ENCODE measurements at regions of chr13 and their contacts with region 1.

Region 1: DNA sequence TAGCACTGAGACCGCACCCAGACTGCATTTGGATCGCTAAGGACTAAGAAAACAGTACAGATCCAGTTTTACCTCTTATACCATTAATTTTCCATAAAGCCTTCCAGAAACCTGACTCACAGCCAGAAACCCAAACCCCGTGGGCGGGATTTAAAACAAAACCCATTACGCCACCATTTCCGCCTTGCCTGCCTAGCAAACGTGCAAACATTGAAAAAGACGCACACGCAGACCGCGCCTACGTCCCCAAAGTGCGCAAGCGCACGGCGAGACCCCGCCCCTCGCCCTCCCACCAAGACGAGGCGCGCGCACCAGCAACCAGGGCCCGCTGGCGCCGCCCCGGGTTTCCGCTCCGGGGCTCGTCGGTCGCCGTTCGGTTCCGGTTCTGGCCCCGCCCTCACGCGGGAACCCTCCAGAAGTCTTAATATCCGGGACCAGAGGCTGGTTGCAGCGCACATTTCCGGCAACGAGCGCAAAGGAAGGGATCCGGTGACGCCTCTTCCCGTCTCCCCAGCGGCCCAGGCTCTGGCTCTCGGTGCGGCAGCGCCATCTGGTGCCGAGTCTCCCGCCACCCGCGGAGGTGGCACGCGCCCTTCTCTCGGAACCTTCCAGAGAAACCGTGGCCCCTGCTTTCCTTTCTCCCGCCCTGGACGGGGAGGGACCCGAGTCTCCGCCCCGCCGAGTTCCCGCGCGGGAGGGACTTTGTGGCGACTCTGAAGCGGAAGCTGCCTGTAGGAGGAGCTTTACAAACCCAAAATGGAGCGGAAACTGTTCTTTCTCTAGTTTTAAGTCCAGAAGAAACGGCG is 256.9 kb upstream of the STARD13 start:
- DNase-seq: peak; percentile 100
- ATAC-seq: peak; percentile 83
- H3K4me3 ChIP-seq: peak overlapping the region; percentile 57 to 98 (median 84)
- H3K4me3 Mint-ChIP-seq: peak overlapping the region; percentile 96
- H3K27ac ChIP-seq: peak overlapping the region; percentile 95 to 100
- H3K27ac Mint-ChIP-seq: peak overlapping the region; percentile 100
- H3K4me1 ChIP-seq: peaks cover 19 to 26% of the 10 kb centered on the region in 2 donors
- H3K4me1 Mint-ChIP-seq: peaks cover 39% of the 10 kb centered on the region
- H3K27me3 ChIP-seq: no peaks in the 10 kb centered on the region
- H3K27me3 Mint-ChIP-seq: no peaks in the 10 kb centered on the region
- CTCF ChIP-seq: peak; percentile 79

Region 2: DNA sequence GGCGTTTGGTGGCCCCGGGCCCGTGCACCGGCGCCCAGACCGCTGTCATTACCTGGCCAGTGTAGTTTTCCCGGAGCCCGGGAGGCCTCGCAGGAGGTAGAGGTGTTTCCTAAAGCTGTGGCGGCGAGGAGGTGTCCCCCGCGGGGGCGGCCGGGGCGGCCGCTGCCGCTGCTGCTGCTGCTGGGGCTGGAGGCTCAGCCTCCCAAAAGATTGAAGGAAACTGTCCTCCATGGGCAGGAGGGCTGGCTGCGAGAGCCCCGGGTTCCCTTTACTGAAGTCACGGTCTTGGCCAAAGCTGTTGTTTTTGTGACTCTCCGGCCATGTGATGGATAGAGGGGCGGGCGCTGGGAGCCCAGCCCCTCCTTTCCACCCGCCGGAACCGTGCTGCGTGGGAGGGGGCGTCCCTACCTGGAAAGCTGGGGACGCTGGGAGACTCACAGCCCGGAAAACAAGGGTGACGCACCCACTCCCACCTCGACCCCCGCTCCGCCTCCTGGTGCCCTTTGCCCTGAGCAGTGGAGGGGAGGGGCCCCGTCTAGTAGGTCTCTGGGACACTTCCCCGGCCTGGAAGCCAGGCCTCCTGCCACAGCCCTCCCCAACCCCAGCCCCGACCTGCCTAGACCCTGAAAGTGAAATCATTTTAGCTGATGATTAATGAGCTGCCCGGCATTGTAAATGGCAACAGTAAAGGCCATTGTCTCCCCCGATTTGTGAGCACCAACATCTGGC is 1114.5 kb before region 1 on chr13 and contains the start of gene N4BP2L1:
- CTCF ChIA-PET with region 1: no interaction called
- POLR2A ChIA-PET with region 1: interaction called, 3 read pairs
- intact Hi-C with region 1: loop called (anchors 1 kb)
- DNase-seq: peak; percentile 93
- ATAC-seq: peak; percentile 74
- H3K4me3 ChIP-seq: peak within 1 kb of the TSS; percentile 73 to 93 (median 80)
- H3K4me3 Mint-ChIP-seq: peak within 1 kb of the TSS; percentile 88
- H3K27ac ChIP-seq: peak within 1 kb of the TSS; percentile 95 to 98
- H3K27ac Mint-ChIP-seq: peak within 1 kb of the TSS; percentile 96
- H3K4me1 ChIP-seq: peaks cover 28 to 47% of the 10 kb centered on the region in 2 donors
- H3K4me1 Mint-ChIP-seq: peaks cover 48% of the 10 kb centered on the region
- H3K27me3 ChIP-seq: no peaks in the 10 kb centered on the region
- H3K27me3 Mint-ChIP-seq: no peaks in the 10 kb centered on the region
- CTCF ChIP-seq: no peak
- total RNA-seq, gene N4BP2L1: 52.8 and 59.0 TPM in 2 replicates

Region 3: DNA sequence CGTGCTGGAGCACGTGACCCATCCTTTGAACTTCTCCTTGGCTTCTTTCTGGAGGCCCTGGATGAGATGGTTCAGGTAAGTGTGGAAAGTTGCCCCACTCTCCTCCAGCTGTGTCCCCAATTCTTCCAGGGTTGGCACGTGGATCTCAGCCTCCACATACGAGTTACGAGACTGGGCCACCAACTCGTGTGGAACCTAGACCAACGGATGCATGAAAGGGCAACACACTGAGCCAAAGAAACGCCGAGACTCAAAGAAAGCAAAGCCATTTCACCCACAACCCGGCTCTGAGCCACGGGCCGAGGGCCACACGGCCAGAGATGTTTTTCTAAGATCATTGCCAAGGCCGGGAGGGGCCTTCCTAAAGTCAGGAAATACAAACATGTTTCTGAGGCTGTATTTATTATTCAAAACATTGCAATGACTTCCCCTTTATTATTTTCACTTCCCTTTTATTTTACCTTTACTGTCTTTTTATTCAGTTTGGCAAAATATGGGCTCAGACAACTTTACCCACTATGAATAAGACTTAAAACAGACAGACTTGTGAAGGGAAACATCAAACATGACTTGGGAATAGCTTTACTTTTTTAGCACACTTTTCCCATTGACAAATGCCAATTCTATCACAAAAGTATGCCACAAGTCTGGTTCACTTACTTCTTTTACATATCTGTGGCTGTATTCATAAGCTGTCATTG is 431.6 kb before region 1 on chr13:
- CTCF ChIA-PET with region 1: no interaction called
- POLR2A ChIA-PET with region 1: no interaction called
- intact Hi-C with region 1: loop called (anchors 5 kb)
- DNase-seq: peak; percentile 65
- ATAC-seq: peak; percentile 69
- H3K4me3 ChIP-seq: peak overlapping the region in 3 of 5 experiments; percentile 12 to 44 (median 41)
- H3K4me3 Mint-ChIP-seq: peak overlapping the region; percentile 77
- H3K27ac ChIP-seq: no peak overlapping the region
- H3K27ac Mint-ChIP-seq: peak overlapping the region; percentile 69
- H3K4me1 ChIP-seq: peaks cover 33 to 43% of the 10 kb centered on the region in 2 donors
- H3K4me1 Mint-ChIP-seq: peaks cover 47% of the 10 kb centered on the region
- H3K27me3 ChIP-seq: peaks cover 0 to 19% (median 8%) of the 10 kb centered on the region in 4 experiments
- H3K27me3 Mint-ChIP-seq: peaks cover 37% of the 10 kb centered on the region
- CTCF ChIP-seq: no peak

Region 4: DNA sequence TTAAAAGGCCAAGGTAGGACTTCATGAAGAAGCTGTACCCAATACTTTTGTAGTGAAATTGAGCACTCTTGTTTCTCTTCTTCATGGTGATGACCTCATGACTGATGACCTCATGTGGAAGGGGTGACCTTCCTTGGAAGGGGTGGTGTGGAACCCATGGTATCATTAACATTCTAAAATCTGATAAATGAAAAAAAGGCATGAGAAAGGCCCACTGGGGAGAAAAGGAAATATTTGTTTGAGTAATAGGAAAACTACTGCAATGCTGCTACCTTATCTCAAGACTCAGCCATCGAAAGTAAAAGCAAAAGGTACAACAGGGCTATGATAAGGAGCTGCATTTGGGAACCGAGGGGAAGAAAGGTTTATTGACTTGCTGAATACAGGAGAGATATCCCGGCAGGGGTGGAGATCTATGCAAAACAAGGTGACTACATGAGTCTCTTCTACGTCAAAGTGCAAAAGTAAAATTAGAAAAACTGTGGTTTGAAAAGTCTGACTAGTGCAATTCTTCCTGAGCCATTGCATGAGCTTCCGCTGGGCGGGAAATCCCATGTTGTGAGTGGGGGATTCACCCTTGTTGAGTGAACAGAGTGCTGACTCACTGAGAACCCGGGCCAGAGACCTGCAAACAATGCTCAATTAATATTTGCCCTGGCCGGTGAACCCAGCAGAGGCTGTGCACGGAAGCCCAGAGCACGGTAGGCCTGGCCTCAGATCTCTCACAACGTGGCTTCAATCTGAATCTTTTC is 136.6 kb after region 1 on chr13:
- CTCF ChIA-PET with region 1: interaction called, 3 read pairs
- POLR2A ChIA-PET with region 1: no interaction called
- intact Hi-C with region 1: loop called (anchors 2 kb)
- DNase-seq: peak; percentile 68
- ATAC-seq: peak; percentile 90
- H3K4me3 ChIP-seq: peak overlapping the region in 4 of 5 experiments; percentile 16 to 48 (median 35)
- H3K4me3 Mint-ChIP-seq: peak overlapping the region; percentile 78
- H3K27ac ChIP-seq: no peak overlapping the region
- H3K27ac Mint-ChIP-seq: peak overlapping the region; percentile 34
- H3K4me1 ChIP-seq: peaks cover 0 to 11% of the 10 kb centered on the region in 2 donors
- H3K4me1 Mint-ChIP-seq: peaks cover 10% of the 10 kb centered on the region
- H3K27me3 ChIP-seq: no peaks in the 10 kb centered on the region
- H3K27me3 Mint-ChIP-seq: peaks cover 10% of the 10 kb centered on the region
- CTCF ChIP-seq: no peak

Region 5: DNA sequence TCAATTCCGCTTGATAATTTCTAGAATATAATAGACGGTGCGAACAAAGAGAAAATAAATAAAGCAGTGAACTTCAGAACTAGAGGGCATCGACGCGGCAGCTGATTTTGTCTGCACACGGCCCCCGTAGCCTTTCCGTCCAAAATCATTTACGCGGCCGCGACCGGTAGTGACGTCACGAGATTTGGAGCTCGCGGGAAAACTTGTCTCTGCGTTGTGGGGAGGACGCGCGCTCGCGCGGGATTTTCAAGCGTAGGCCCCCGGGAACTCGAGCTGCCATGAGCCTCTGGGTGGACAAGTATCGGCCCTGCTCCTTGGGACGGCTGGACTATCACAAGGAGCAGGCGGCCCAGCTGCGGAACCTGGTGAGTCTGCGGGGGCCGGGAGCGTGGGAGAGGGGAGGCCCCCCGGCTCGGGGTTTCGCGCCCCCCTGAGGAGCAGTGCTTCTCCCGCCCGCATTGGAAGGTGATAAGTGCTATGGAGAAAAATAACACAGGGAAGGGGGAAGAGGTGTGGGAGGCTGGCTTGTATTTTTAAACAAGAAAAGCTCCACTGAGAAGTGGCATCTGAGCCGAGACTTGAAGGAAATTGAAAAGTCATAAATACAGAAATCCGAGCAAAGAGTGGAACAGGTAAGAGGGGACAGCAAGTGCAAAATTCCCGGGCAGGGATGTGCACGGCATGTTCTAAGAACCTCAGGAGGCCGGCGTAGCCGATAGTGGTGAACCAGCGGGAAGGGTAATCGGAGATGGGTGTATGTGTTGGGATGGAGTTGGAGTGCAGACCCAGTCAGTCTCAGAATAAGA is 275.6 kb after region 1 on chr13 and contains the start of gene RFC3:
- CTCF ChIA-PET with region 1: interaction called, 6 read pairs
- POLR2A ChIA-PET with region 1: interaction called, 3 read pairs
- intact Hi-C with region 1: loop called (anchors 1 kb)
- DNase-seq: peak; percentile 94
- ATAC-seq: peak; percentile 84
- H3K4me3 ChIP-seq: peak within 1 kb of the TSS; percentile 83 to 97 (median 94)
- H3K4me3 Mint-ChIP-seq: peak within 1 kb of the TSS; percentile 94
- H3K27ac ChIP-seq: peak within 1 kb of the TSS; percentile 50 to 63
- H3K27ac Mint-ChIP-seq: peak within 1 kb of the TSS; percentile 90
- H3K4me1 ChIP-seq: peaks cover 3 to 13% of the 10 kb centered on the region in 2 donors
- H3K4me1 Mint-ChIP-seq: peaks cover 18% of the 10 kb centered on the region
- H3K27me3 ChIP-seq: no peaks in the 10 kb centered on the region
- H3K27me3 Mint-ChIP-seq: no peaks in the 10 kb centered on the region
- CTCF ChIP-seq: no peak
- total RNA-seq, gene RFC3: 9.2 and 9.4 TPM in 2 replicates

Region 6: GRCh38 chr13:34364633-34365032 is 822.1 kb after region 1 on chr13:
- CTCF ChIA-PET with region 1: no interaction called
- POLR2A ChIA-PET with region 1: no interaction called
- intact Hi-C with region 1: no loop called
- DNase-seq: no peak
- ATAC-seq: no peak
- H3K4me3 ChIP-seq: no peak overlapping the region
- H3K4me3 Mint-ChIP-seq: no peak overlapping the region
- H3K27ac ChIP-seq: no peak overlapping the region
- H3K27ac Mint-ChIP-seq: no peak overlapping the region
- H3K4me1 ChIP-seq: no peaks in the 10 kb centered on the region
- H3K4me1 Mint-ChIP-seq: no peaks in the 10 kb centered on the region
- H3K27me3 ChIP-seq: no peaks in the 10 kb centered on the region
- H3K27me3 Mint-ChIP-seq: no peaks in the 10 kb centered on the region
- CTCF ChIP-seq: no peak